ENCODE measurements at regions of chr5 and their contacts with region 1.

Region 1: DNA sequence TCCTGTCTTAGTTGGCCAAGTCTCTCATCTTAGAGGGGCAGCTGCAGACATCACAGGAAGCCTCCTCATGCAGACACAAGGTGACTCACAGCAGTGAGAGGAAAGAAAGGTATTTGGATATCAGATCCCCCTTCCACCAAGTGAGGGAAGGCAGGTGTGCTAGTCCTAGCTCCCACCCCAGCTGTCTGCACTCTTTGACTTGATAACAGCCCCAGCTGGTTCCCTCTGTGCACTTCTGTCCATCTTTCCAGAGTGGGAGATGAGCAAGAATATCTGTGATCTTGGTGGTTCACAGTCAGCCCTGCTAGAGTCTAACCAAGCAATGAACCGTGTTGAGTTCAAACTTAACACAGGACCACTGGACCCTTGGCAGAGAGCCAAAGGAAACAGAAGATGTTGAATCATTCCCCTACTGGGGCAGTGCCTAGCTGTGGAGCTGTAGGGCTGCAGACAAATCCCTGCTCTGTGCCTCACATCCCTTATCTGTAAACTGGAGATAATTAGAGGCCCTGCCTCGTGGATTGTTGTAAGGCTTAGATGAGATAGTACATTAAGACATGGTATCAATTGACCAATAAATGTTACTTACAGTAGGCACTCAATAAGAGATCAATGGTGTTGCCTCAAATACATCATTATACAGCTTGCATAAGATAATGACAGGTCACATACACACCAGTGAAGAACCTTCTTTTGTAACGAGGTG is 39.1 kb downstream of the SH3RF2 start:
- DNase-seq: peak; percentile 72
- H3K4me3 ChIP-seq: no peak overlapping the region
- H3K27ac ChIP-seq: peak overlapping the region; percentile 56
- H3K4me1 ChIP-seq: peaks cover 20% of the 10 kb centered on the region
- H3K27me3 ChIP-seq: no peaks in the 10 kb centered on the region
- CTCF ChIP-seq: no peak
- POLR2A ChIP-seq: no peak

Region 2: DNA sequence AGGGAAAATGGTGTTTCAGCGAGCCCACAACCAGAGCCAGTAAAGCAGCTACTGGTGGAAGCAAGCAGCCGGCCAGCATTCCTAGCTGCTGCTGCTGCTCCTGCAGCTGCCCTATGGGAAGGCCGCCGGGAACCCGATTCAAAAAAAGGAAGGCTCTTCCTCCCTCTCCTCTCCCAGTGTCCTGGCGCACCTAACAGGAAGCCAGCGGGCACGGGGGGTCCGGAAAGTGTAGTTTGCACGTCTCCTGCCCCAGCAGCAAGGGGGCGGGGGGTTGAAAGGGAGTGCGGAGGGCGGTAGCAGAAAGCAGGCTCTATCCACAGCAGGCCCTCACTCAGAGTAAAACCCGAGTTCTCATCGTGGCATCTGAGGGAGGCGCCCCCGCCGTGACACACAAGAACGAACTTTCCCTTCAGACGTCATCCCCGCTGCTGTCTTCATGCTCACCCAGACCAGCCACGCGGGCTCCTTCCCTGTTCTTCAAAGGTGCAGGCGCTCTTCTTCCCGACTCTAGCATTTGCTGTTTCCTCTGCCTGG is 119.2 kb before region 1 on chr5:
- CTCF ChIA-PET with region 1: no interaction called
- POLR2A ChIA-PET with region 1: no interaction called
- dilution Hi-C with region 1: no loop called
- intact Hi-C with region 1: loop called (anchors 5 kb)
- DNase-seq: peak; percentile 41
- H3K4me3 ChIP-seq: peak overlapping the region in 1 of 3 experiments; percentile 2
- H3K27ac ChIP-seq: no peak overlapping the region
- H3K4me1 ChIP-seq: peaks cover 18% of the 10 kb centered on the region
- H3K27me3 ChIP-seq: peaks cover 0 to 4% of the 10 kb centered on the region in 2 experiments
- CTCF ChIP-seq: no peak
- POLR2A ChIP-seq: no peak

Region 3: DNA sequence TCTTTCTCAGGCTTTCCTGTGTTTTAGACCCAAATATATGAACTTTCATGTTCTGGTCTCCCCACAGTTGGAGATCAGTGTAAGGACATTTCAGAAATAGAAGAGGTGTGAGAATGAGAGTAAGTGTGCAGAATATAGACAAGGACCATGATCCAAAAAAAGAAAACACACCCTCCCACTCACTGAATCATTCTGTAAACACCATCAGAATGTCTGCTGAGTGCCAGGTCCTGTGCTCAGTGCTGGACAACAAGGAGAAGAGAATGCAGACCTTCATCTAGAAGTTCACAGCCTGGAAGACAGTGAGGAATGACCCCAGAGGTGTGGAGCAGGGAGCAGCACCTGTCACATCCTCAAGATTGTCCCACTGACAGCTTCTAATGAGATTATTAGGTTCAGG is 58.2 kb before region 1 on chr5:
- CTCF ChIA-PET with region 1: no interaction called
- POLR2A ChIA-PET with region 1: no interaction called
- dilution Hi-C with region 1: no loop called
- intact Hi-C with region 1: no loop called
- DNase-seq: no peak
- H3K4me3 ChIP-seq: no peak overlapping the region
- H3K27ac ChIP-seq: no peak overlapping the region
- H3K4me1 ChIP-seq: no peaks in the 10 kb centered on the region
- H3K27me3 ChIP-seq: peaks cover 0 to 2% of the 10 kb centered on the region in 2 experiments
- CTCF ChIP-seq: no peak
- POLR2A ChIP-seq: no peak

Region 4: DNA sequence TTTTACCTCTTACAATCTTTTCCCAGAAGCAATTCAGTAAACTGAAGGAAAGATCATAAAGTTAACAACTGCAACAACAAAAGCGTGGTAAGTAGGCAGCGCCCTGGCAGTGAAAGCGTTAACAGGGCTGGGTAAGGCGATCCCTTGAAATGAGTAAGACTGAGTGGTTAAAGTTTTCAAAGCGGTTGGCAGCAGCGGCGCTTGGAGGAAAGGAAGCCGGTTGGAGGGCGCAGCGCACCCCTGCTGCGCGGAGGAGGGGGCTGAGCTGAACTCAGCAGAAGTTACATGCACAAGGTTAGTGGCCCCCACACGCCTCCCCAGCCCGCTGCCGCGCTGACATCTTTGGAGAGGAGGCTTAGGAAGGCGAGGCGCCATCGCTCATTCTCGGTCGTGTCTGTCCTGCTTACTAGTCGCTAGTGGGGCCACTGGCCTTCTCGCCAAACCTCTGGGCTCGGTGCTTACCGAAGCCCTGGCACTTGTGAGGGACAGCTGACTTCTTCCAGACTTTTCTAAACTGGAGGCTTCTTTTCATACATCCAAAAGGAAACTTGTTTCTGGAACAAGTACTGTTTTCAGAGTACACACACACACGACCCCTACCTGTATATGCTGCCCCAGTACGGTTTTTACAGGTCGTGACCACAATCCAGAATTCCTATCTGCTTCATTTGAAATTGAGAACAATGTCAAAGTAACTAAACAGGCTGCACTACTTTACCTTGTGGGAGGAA is 38.9 kb before region 1 on chr5 and contains the start of gene SH3RF2:
- CTCF ChIA-PET with region 1: interaction called, 4 read pairs
- POLR2A ChIA-PET with region 1: no interaction called
- dilution Hi-C with region 1: no loop called
- intact Hi-C with region 1: loop called (anchors 1 kb)
- DNase-seq: peak; percentile 86
- H3K4me3 ChIP-seq: peak within 1 kb of the TSS; percentile 0 to 53 (median 38)
- H3K27ac ChIP-seq: no peak within 1 kb of the TSS
- H3K4me1 ChIP-seq: peaks cover 12% of the 10 kb centered on the region
- H3K27me3 ChIP-seq: peaks cover 0 to 11% of the 10 kb centered on the region in 2 experiments
- CTCF ChIP-seq: no peak
- POLR2A ChIP-seq: no peak
- total RNA-seq, gene SH3RF2: 0.84 and 0.90 TPM in 2 replicates

Region 5: GRCh38 chr5:146041180-146041789 is 65.8 kb after region 1 on chr5:
- CTCF ChIA-PET with region 1: interaction called, 3 read pairs
- POLR2A ChIA-PET with region 1: no interaction called
- dilution Hi-C with region 1: no loop called
- intact Hi-C with region 1: loop called (anchors 2 kb)
- DNase-seq: no peak
- H3K4me3 ChIP-seq: no peak overlapping the region
- H3K27ac ChIP-seq: no peak overlapping the region
- H3K4me1 ChIP-seq: peaks cover 9% of the 10 kb centered on the region
- H3K27me3 ChIP-seq: no peaks in the 10 kb centered on the region
- CTCF ChIP-seq: peak; percentile 12 to 23
- POLR2A ChIP-seq: no peak